ENCODE measurements at regions of chr7 and their contacts with region 1.

Region 1: GRCh38 chr7:5193880-5194279 is 3.8 kb downstream of the WIPI2 start:
- DNase-seq: no peak
- H3K4me3 ChIP-seq: no peak overlapping the region
- H3K4me3 Mint-ChIP-seq: no peak overlapping the region
- H3K27ac ChIP-seq: no peak overlapping the region
- H3K27ac Mint-ChIP-seq: peak overlapping the region in 1 of 7 donors; percentile 12
- H3K4me1 ChIP-seq: peaks cover 28% of the 10 kb centered on the region
- H3K4me1 Mint-ChIP-seq: peaks cover 26 to 45% (median 28%) of the 10 kb centered on the region in 4 donors
- H3K27me3 ChIP-seq: no peaks in the 10 kb centered on the region
- H3K27me3 Mint-ChIP-seq: no peaks in the 10 kb centered on the region

Region 2: DNA sequence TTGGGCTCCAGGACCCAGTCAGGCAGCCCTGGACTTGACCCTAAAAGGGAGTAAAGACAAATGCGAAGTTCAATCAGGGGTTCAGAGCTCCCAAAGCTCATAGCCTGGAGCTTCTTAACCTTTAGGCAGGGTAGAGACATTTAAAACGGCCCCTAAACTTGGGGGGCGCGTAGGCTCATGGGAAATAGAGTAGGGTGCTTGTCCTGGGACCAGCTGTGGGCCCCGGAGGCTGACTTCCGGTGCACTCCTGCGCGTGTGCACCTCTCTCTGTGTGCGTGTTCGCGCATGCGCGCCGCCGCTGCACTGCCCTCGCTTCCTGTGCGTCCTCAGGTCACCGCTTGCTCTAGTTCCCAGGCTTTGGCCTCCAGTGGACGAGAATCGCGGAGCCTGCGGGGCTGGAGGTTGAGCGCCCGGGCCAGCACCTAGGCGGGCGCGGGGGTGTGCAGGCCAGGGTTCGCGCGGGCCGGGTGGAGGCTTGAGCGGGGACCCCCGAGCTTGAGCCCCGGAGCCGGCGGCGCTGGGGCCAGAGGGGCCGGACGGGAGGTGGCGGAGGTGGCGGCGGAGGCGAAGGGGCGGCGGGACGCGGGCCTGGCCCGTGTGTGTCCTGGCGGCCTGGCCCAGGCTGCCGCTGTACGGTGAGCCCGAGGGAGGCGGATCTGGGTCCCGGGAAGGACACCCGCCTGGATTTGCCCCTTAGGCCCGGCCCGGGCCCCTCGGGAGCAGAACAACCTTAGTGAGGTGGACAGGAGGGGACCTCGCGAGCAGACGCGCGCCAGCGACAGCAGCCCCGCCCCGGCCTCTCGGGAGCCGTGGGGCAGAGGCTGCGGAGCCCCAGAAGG is 148.1 kb before region 1 on chr7 and contains the start of gene RBAK:
- CTCF ChIA-PET with region 1: no interaction called
- POLR2A ChIA-PET with region 1: no interaction called
- intact Hi-C with region 1: loop called (anchors 2 kb)
- DNase-seq: peak; percentile 84 to 90 (median 88)
- H3K4me3 ChIP-seq: peak within 1 kb of the TSS in 1 of 2 donors; percentile 83
- H3K4me3 Mint-ChIP-seq: peak within 1 kb of the TSS; percentile 88 to 97 (median 94)
- H3K27ac ChIP-seq: peak within 1 kb of the TSS; percentile 89
- H3K27ac Mint-ChIP-seq: peak within 1 kb of the TSS; percentile 89 to 96 (median 95)
- H3K4me1 ChIP-seq: peaks cover 5% of the 10 kb centered on the region
- H3K4me1 Mint-ChIP-seq: peaks cover 18 to 50% (median 24%) of the 10 kb centered on the region in 4 donors
- H3K27me3 ChIP-seq: no peaks in the 10 kb centered on the region
- H3K27me3 Mint-ChIP-seq: no peaks in the 10 kb centered on the region
- total RNA-seq, gene RBAK: 19.4 to 20.3 TPM

Region 3: GRCh38 chr7:5296611-5297226 is 102.8 kb after region 1 on chr7:
- CTCF ChIA-PET with region 1: no interaction called
- POLR2A ChIA-PET with region 1: no interaction called
- intact Hi-C with region 1: loop called (anchors 1 kb)
- DNase-seq: peak; percentile 74 to 85 (median 80)
- H3K4me3 ChIP-seq: peak overlapping the region in 1 of 2 donors; percentile 44
- H3K4me3 Mint-ChIP-seq: peak overlapping the region; percentile 84 to 92 (median 87)
- H3K27ac ChIP-seq: no peak overlapping the region
- H3K27ac Mint-ChIP-seq: peak overlapping the region in 6 of 7 donors; percentile 65 to 95 (median 80)
- H3K4me1 ChIP-seq: peaks cover 14% of the 10 kb centered on the region
- H3K4me1 Mint-ChIP-seq: peaks cover 10 to 13% (median 10%) of the 10 kb centered on the region in 4 donors
- H3K27me3 ChIP-seq: no peaks in the 10 kb centered on the region
- H3K27me3 Mint-ChIP-seq: peaks cover 0 to 2% of the 10 kb centered on the region in 2 donors

Measured in CD4-positive, alpha-beta memory T cell (primary cell).